ENCODE measurements at regions of chr14 and their contacts with region 1.

Region 1: DNA sequence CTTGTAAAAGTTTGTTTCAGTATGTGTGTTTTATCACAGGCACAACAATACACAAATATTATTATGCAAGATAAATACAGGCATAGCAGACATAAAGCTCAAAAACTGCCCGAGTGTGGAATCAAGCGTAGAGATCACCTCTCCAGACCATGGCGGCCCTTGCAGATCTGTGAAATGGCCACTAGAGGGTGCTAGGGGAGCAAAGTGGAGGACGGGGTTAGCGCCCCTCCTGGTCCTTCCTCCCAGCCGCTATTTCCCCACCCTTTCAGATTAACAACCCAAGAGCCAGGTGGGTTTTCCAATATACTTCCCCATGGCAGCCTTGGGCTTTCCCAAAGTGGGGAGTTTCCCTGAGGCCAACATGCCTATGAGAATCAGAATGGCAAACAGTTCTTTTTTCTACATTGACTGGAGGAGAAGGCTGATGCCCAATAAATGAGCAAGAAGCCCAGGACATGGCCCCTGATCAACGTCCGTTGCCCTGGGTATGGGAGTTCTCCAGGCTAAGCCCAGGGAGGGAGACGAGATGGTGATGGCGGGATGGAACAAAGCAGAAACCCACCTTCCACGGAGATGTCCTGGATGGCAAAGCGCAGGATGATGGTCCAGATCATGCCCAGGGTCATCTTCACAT is 67.4 kb downstream of the ACTN1 start:
- DNase-seq: peak; percentile 73 to 84
- ATAC-seq: peak; percentile 85 to 92 (median 88)
- H3K4me3 ChIP-seq: no peak overlapping the region
- H3K27ac ChIP-seq: peak overlapping the region in 4 of 10 donors; percentile 5 to 36 (median 10)
- H3K4me1 ChIP-seq: peaks cover 0 to 41% (median 9%) of the 10 kb centered on the region in 9 donors
- H3K27me3 ChIP-seq: no peaks in the 10 kb centered on the region
- CTCF ChIP-seq: peak; percentile 95 to 100 (median 99)

Region 2: GRCh38 chr14:68939893-68940613 is 28.3 kb after region 1 on chr14:
- intact Hi-C with region 1: loop called in 1 of 10 experiments (anchors 2 kb)
- DNase-seq: peak; percentile 74 to 90
- ATAC-seq: peak; percentile 57 to 80 (median 75)
- H3K4me3 ChIP-seq: peak overlapping the region in 1 of 10 donors; percentile 2
- H3K27ac ChIP-seq: peak overlapping the region; percentile 65 to 94 (median 90)
- H3K4me1 ChIP-seq: peaks cover 74 to 100% (median 98%) of the 10 kb centered on the region in 9 donors
- H3K27me3 ChIP-seq: no peaks in the 10 kb centered on the region
- CTCF ChIP-seq: peak in 2 of 9 donors; percentile 6 to 15

Region 3: GRCh38 chr14:69005432-69006147 is 93.9 kb after region 1 on chr14:
- intact Hi-C with region 1: loop called in 7 of 10 experiments (anchors 1 to 5 kb)
- DNase-seq: peak; percentile 29 to 52
- ATAC-seq: peak; percentile 8 to 88 (median 65)
- H3K4me3 ChIP-seq: no peak overlapping the region
- H3K27ac ChIP-seq: peak overlapping the region in 2 of 10 donors; percentile 1 to 59
- H3K4me1 ChIP-seq: peaks cover 0 to 25% (median 0%) of the 10 kb centered on the region in 9 donors
- H3K27me3 ChIP-seq: no peaks in the 10 kb centered on the region
- CTCF ChIP-seq: no peak

Region 4: GRCh38 chr14:69107407-69108003 is 195.8 kb after region 1 on chr14:
- intact Hi-C with region 1: loop called in 7 of 10 experiments (anchors 5 kb)
- DNase-seq: peak in 1 of 2 donors; percentile 61
- ATAC-seq: peak; percentile 34 to 82 (median 66)
- H3K4me3 ChIP-seq: no peak overlapping the region
- H3K27ac ChIP-seq: no peak overlapping the region
- H3K4me1 ChIP-seq: peaks cover 0 to 6% (median 0%) of the 10 kb centered on the region in 9 donors
- H3K27me3 ChIP-seq: no peaks in the 10 kb centered on the region
- CTCF ChIP-seq: peak; percentile 34 to 79 (median 69)

Measured in heart right ventricle (tissue), 16 donors.